ENCODE measurements at regions of chr5 and their contacts with region 1.

Region 1: DNA sequence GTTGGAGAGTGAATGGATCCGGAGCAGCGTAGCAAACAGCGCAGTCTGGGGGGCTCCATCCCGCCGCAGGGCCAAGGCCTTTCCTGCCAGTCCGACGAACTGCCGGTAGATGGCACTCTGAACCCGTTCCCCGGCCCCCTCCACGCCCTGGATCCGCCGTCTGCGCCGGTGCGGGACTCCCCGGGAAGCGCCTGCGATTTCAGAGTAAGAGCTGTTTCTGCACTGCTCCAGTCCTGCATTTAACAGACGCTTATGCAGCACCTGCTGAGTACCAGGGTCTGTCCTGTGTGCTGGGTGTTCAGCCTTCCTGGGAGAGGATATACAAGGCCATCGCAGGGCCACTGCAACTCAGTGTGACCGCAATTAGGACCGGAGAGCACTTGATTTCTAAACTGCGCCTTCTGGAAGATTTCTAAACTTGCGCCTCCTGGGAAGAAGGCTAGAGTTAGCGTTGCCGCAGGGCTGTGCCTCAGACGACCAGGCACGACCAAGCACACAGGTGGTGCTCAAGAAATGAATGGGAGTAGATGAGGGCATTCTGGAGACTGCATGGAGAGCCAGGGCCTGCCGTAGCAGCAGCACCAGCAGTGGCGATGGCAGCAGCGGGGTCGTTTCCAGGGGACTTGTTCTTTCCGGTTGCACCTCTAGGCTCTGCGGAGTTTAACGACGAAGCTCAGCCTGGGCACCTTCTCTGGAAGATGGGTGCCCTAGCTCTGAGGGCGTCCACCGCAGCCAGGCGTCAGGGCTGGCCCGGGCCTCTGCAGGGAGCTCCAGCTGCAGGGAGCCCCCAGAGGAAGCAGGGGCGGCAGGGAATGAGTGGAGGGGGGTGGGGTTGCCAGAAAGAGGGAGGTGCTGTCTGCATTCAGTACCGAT is 14.3 kb upstream of the TIFAB start:
- DNase-seq: peak; percentile 91
- ATAC-seq: peak; percentile 83
- H3K4me3 Mint-ChIP-seq: peak overlapping the region; percentile 77
- H3K27ac Mint-ChIP-seq: no peak overlapping the region
- H3K4me1 Mint-ChIP-seq: peaks cover 23% of the 10 kb centered on the region
- H3K27me3 Mint-ChIP-seq: peaks cover 91% of the 10 kb centered on the region
- CTCF ChIP-seq: peak; percentile 66

Region 2: DNA sequence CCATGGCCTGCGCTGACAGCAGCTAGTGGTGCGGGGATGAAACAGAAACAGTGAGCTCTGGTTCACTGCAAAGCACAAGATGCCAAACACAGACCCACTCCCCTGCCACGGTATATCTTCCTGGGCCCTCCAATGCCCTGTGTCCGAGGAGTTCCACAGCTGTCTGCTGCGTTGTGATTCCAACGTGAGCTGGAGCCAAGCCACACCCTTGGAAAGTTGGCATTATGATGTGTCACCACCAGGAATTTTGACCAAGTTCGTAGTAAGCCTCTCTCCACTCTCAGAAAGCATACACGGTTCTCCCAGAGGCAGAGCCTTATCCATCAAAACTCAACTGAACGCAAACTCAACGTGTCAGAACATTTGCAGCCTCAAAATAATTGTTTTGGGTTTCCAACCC is 123.0 kb before region 1 on chr5:
- CTCF ChIA-PET with region 1: no interaction called
- POLR2A ChIA-PET with region 1: interaction called, 11 read pairs
- DNase-seq: no peak
- ATAC-seq: no peak
- H3K4me3 Mint-ChIP-seq: no peak overlapping the region
- H3K27ac Mint-ChIP-seq: no peak overlapping the region
- H3K4me1 Mint-ChIP-seq: no peaks in the 10 kb centered on the region
- H3K27me3 Mint-ChIP-seq: no peaks in the 10 kb centered on the region
- CTCF ChIP-seq: no peak

Region 3: GRCh38 chr5:135476615-135477582 is 10.5 kb after region 1 on chr5:
- CTCF ChIA-PET with region 1: interaction called, 47 read pairs
- POLR2A ChIA-PET with region 1: no interaction called
- DNase-seq: no peak
- ATAC-seq: no peak
- H3K4me3 Mint-ChIP-seq: no peak overlapping the region
- H3K27ac Mint-ChIP-seq: no peak overlapping the region
- H3K4me1 Mint-ChIP-seq: peaks cover 28% of the 10 kb centered on the region
- H3K27me3 Mint-ChIP-seq: peaks cover 70% of the 10 kb centered on the region
- CTCF ChIP-seq: no peak

Region 4: DNA sequence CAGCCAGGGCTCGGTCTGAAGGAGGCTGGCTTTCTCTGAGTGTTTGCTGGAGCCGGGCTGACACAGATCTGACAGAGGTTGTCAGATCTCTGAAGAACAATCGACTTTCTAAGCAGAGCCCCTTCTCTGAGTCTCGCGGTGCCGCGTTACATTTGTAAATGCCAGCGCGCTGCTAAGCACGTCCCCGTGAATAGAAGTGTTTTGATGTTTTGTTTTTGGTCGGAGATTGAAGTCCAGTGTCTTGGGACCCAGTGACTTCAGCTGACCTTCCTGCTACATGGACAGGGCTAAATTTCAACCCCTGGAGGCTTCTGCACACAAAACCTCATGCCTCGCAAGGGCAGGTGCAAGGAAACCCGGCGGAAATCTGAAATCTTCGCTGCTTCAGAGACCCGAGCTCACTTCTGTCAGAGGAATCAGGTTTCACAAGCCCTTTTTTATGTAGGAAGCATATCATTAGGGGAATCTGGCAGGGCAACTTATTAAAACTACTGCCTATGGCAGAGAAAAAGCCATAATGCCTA is 42.1 kb after region 1 on chr5:
- CTCF ChIA-PET with region 1: interaction called, 15 read pairs
- POLR2A ChIA-PET with region 1: no interaction called
- DNase-seq: peak; percentile 40
- ATAC-seq: peak; percentile 79
- H3K4me3 Mint-ChIP-seq: peak overlapping the region; percentile 45
- H3K27ac Mint-ChIP-seq: no peak overlapping the region
- H3K4me1 Mint-ChIP-seq: peaks cover 17% of the 10 kb centered on the region
- H3K27me3 Mint-ChIP-seq: peaks cover 78% of the 10 kb centered on the region
- CTCF ChIP-seq: no peak

Region 5: GRCh38 chr5:135551593-135552447 is 85.4 kb after region 1 on chr5:
- CTCF ChIA-PET with region 1: interaction called, 524 read pairs
- POLR2A ChIA-PET with region 1: interaction called, 3 read pairs
- DNase-seq: peak; percentile 79
- ATAC-seq: peak; percentile 80
- H3K4me3 Mint-ChIP-seq: no peak overlapping the region
- H3K27ac Mint-ChIP-seq: no peak overlapping the region
- H3K4me1 Mint-ChIP-seq: 0 out of 2 replicates have a peak, but pooled peaks cover 3% of the 10 kb centered on the region
- H3K27me3 Mint-ChIP-seq: peaks cover 69% of the 10 kb centered on the region
- CTCF ChIP-seq: peak; percentile 63

Region 6: DNA sequence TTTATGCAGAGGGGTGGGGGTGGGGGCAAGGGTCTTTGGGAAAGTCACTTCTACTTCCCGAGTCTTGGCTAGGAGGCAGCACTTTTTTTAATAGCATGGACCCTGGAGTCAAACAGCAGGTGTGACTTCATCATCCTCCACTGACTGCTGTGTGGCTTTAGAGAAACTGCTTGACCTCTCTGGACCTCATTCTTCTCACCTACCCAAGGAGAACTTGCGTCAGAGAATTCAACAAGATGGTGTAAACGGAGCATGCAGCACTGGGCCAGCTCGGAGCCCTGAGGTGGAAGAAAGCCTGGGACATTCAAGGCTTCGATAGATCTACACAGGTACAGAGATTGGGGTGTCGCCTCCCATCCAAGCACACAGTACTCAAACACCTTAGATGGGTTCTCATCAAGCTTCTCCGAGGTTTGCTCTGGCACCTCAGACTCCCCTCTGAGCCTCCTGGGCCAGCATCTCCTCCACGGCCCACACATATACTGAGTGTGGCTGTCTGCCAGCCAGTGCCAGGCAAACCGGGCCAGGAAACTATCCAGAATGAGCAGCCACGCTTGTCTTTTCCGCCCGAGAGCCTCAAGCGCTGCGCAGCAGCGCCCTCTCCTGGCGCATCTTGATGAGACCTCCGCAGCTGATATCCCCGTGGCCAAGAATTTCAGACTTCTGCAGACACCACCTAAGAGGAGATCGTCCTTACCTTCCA is 363.4 kb after region 1 on chr5:
- CTCF ChIA-PET with region 1: interaction called, 18 read pairs
- POLR2A ChIA-PET with region 1: no interaction called
- DNase-seq: peak; percentile 80
- ATAC-seq: peak; percentile 18
- H3K4me3 Mint-ChIP-seq: no peak overlapping the region
- H3K27ac Mint-ChIP-seq: no peak overlapping the region
- H3K4me1 Mint-ChIP-seq: 0 out of 2 replicates have a peak, but pooled peaks cover 2% of the 10 kb centered on the region
- H3K27me3 Mint-ChIP-seq: peaks cover 49% of the 10 kb centered on the region
- CTCF ChIP-seq: peak; percentile 92